ENCODE measurements at regions of chr9 and their contacts with region 1.

Region 1: GRCh38 chr9:96854073-96854876 is at the start of gene ZNF782:
- DNase-seq: peak; percentile 96
- H3K4me3 Mint-ChIP-seq: peak within 1 kb of the TSS; percentile 100
- H3K27ac Mint-ChIP-seq: peak within 1 kb of the TSS; percentile 99
- H3K4me1 Mint-ChIP-seq: peaks cover 42% of the 10 kb centered on the region
- H3K27me3 Mint-ChIP-seq: peaks cover 21% of the 10 kb centered on the region
- total RNA-seq, gene ZNF782: 4.3 and 5.1 TPM in 2 replicates

Region 2: DNA sequence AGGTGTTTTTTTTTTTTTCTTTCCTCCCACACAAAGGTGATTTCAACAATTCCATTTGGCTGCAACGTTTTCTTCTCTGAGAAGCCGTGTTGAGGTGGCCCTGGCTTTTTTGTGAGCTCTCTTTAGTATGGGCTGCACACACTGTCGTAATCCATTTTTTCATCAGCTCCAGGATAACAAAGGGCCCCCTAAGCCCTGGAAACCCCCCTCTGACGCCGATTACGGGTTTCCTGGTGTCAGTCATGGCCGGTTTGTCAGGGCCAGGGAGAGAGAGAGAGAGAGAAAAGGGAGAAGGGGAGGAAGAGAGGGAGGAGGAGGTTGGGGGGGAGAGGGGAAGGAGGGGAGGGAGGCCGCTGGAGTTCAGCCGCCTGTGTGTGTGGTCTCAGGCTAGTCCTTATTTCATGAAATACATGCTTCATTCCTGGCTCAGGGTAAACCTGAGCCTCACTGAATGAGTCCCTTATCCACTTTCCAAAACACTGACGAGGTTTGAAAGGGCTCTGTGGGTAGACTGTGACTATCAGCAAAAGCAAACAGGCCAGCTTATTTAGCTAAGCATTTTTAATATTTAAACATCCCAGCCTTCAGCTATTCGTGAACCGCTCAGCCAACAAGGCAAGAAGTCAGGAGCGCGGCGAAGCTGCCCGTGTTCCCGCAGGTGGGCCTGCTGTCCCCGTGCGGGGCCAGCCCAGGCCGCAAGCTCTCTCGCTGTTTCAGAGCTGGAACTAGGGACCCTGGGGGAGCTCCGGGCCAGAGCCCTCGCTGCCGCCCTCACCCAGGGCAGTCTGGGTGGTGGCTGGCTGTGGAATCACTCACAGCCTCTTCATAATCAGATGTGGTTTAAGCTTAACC is 805.9 kb before region 1 on chr9:
- intact Hi-C with region 1: no loop called
- DNase-seq: no peak
- H3K4me3 Mint-ChIP-seq: peak overlapping the region; percentile 35
- H3K27ac Mint-ChIP-seq: peak overlapping the region; percentile 87
- H3K4me1 Mint-ChIP-seq: peaks cover 3% of the 10 kb centered on the region
- H3K27me3 Mint-ChIP-seq: peaks cover 3% of the 10 kb centered on the region

Region 3: GRCh38 chr9:96875461-96876364 is 21.4 kb after region 1 on chr9:
- intact Hi-C with region 1: loop called (anchors 1 kb)
- DNase-seq: peak; percentile 84
- H3K4me3 Mint-ChIP-seq: peak overlapping the region; percentile 87
- H3K27ac Mint-ChIP-seq: peak overlapping the region; percentile 68
- H3K4me1 Mint-ChIP-seq: peaks cover 26% of the 10 kb centered on the region
- H3K27me3 Mint-ChIP-seq: peaks cover 40% of the 10 kb centered on the region

Region 4: DNA sequence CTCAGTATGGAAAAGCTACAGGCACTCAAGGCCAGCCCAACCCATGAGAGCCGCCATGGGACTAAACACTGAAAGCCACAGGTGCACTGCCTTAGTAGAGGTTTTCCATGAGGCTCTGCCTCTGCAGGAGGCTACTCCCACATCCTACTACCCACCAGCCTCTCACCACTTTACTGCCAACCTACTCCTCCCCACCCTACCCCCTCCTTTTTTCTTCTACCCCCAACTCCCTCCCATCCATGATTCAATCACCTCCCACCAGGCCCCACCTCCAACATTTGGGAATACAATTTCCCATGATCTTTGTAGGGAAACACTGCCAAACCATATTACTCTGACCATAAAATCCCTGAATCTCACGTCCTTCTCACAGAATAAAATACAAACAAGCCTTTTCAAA is 286.3 kb after region 1 on chr9:
- intact Hi-C with region 1: no loop called
- DNase-seq: no peak
- H3K4me3 Mint-ChIP-seq: no peak overlapping the region
- H3K27ac Mint-ChIP-seq: no peak overlapping the region
- H3K4me1 Mint-ChIP-seq: no peaks in the 10 kb centered on the region
- H3K27me3 Mint-ChIP-seq: peaks cover 11% of the 10 kb centered on the region

Region 5: GRCh38 chr9:97160255-97160654 is 306.0 kb after region 1 on chr9:
- intact Hi-C with region 1: loop called (anchors 5 kb)
- DNase-seq: no peak
- H3K4me3 Mint-ChIP-seq: no peak overlapping the region
- H3K27ac Mint-ChIP-seq: no peak overlapping the region
- H3K4me1 Mint-ChIP-seq: peaks cover under 1% of the 10 kb centered on the region
- H3K27me3 Mint-ChIP-seq: peaks cover 7% of the 10 kb centered on the region

Region 6: DNA sequence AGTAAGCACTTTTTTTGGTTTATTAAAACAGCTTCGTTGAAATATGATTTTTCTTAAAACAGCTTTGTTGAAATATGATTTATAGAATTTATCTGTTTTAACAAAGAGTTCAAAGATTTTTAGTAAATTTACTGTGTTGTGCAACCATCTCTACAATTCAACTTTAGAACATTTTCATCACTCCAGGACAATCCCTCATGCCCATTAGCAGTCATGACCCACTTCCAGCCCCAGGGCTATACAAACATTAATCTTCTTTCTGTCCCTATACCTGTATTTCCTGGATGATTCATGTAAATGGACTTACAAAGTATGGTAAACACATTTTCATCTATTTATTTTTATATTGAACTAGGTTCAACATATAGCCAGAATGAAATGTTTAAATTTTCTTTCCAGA is 325.3 kb after region 1 on chr9:
- intact Hi-C with region 1: no loop called
- DNase-seq: no peak
- H3K4me3 Mint-ChIP-seq: no peak overlapping the region
- H3K27ac Mint-ChIP-seq: no peak overlapping the region
- H3K4me1 Mint-ChIP-seq: no peaks in the 10 kb centered on the region
- H3K27me3 Mint-ChIP-seq: peaks cover 14% of the 10 kb centered on the region

Region 7: GRCh38 chr9:97411789-97412625 is 557.7 kb after region 1 on chr9 and contains the start of gene TDRD7:
- intact Hi-C with region 1: loop called (anchors 5 kb)
- DNase-seq: peak; percentile 97
- H3K4me3 Mint-ChIP-seq: peak within 1 kb of the TSS; percentile 87
- H3K27ac Mint-ChIP-seq: peak within 1 kb of the TSS; percentile 81
- H3K4me1 Mint-ChIP-seq: peaks cover 23% of the 10 kb centered on the region
- H3K27me3 Mint-ChIP-seq: peaks cover 34% of the 10 kb centered on the region
- total RNA-seq, gene TDRD7: 5.5 and 6.3 TPM in 2 replicates

Region 8: DNA sequence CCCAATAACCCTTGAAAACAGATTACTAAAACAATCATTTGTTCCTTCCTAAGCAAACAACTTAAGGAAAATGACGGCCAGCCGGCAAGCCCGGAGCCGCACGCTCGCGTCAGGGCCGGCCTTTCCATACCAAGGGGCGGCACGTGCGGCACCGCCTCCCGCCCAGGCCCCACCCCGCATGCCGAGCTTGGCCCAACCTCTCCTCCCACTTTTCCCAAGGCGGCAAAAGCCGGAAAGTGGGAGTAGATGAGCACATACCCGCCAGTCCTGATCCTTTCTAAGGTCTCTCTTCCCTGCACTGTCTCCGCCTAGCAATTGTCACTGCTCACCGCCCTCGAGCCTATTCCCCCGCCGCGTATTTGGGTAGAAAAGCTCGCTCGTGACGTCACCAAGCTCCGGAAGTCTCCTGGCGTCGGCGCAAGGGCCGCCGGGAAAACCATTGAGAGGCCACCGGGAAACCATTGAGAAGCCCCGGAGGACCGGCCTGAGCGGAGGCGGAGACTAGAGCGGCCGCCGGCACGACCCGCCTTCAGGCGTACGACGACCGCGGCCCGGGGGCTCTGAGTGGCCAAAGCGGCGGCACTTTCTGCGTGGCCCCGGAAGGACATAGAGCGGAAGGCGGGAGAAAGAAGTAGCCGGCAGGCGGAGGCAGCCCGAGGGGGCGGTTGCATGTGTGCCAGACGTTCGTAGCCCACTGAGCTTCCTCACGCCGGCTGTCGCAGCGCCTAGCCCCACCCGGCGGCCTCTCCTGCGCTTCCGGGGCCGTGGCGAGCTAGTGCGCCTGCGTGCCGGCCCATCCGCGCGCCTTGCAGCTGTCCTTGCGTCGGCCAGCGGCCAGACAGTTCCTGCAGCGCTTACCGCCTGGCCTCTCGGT is 778.9 kb after region 1 on chr9 and contains the starts of genes NCBP1 and TSTD2:
- intact Hi-C with region 1: loop called (anchors 1 kb)
- DNase-seq: peak; percentile 99
- H3K4me3 Mint-ChIP-seq: peak within 1 kb of the TSS; percentile 95
- H3K27ac Mint-ChIP-seq: peak within 1 kb of the TSS; percentile 99
- H3K4me1 Mint-ChIP-seq: peaks cover 40% of the 10 kb centered on the region
- H3K27me3 Mint-ChIP-seq: no peaks in the 10 kb centered on the region
- total RNA-seq, gene NCBP1: 48.9 and 51.4 TPM in 2 replicates
- total RNA-seq, gene TSTD2: 17.1 and 17.7 TPM in 2 replicates